ENCODE measurements at regions of chr3 and their contacts with region 1.

Region 1: GRCh38 chr3:143054011-143054410 is 52.6 kb downstream of the U2SURP start:
- DNase-seq: no peak
- ATAC-seq: no peak
- H3K4me3 Mint-ChIP-seq: no peak overlapping the region
- H3K27ac Mint-ChIP-seq: no peak overlapping the region
- H3K4me1 Mint-ChIP-seq: peaks cover 2% of the 10 kb centered on the region
- H3K27me3 Mint-ChIP-seq: no peaks in the 10 kb centered on the region

Region 2: DNA sequence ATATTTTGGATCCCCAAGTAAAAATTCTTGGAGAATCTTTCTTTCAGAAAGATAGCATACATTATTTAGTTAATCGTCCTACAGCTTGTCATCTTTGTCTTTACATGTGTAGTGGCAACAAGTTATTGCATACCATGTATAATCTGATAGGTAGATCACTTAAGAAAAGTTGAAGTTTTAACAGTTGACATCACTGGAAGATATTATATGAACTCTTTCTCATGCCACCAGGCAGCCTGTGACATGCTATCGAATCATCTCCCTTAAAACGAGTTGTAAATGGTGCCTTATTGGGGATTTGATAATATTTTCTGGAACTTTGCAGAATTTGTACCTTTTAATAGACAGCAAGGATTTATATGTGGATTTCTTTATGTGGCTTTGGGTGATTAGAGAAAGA is 44.0 kb before region 1 on chr3:
- CTCF ChIA-PET with region 1: no interaction called
- POLR2A ChIA-PET with region 1: interaction called, 5 read pairs
- intact Hi-C with region 1: loop called (anchors 2 to 5 kb)
- DNase-seq: no peak
- ATAC-seq: no peak
- H3K4me3 Mint-ChIP-seq: no peak overlapping the region
- H3K27ac Mint-ChIP-seq: peak overlapping the region; percentile 40
- H3K4me1 Mint-ChIP-seq: peaks cover 76% of the 10 kb centered on the region
- H3K27me3 Mint-ChIP-seq: no peaks in the 10 kb centered on the region

Region 3: DNA sequence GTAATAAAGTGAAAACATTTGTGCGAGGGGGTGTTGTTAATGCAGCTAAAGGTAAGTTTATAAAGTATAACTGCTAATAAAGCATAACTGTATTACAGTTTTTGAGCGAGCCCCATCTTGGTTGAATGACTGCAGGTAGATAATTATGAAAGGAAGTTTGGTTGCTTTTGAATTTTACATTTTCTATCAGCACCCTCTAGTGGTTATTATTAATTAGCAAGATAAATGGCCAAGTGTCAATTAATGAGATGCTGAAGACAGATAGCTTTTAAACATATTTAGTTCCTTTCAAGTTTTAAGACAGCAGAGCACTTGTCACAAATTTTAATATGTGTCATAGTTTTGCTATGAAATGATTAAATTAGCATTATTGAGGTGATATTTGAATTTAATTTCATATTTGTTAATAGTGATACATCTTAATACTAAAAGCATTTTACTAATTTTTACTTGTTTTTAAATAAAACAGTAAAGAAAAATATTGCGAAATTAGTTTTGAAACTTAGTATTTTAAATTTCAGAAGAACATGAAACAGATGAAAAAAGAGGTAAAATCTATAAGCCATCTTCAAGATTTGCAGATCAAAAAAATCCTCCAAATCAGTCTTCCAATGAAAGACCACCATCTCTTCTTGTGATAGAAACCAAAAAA is 37.6 kb before region 1 on chr3:
- CTCF ChIA-PET with region 1: no interaction called
- POLR2A ChIA-PET with region 1: no interaction called
- intact Hi-C with region 1: loop called (anchors 2 to 5 kb)
- DNase-seq: no peak
- ATAC-seq: no peak
- H3K4me3 Mint-ChIP-seq: no peak overlapping the region
- H3K27ac Mint-ChIP-seq: no peak overlapping the region
- H3K4me1 Mint-ChIP-seq: peaks cover 24% of the 10 kb centered on the region
- H3K27me3 Mint-ChIP-seq: no peaks in the 10 kb centered on the region

Measured in activated CD4-positive, alpha-beta T cell treated with anti-CD3 and anti-CD28 coated beads for 36 hours (primary cell).